OCI-LY7 (cell line): ENCODE measurements at regions of chr1 and their contacts with region 1.

Region 1: GRCh38 chr1:46724991-46725735 is 6.2 kb upstream of the EFCAB14 start:
- DNase-seq: peak; percentile 77
- H3K4me3 ChIP-seq: no peak overlapping the region
- H3K27ac ChIP-seq: no peak overlapping the region
- H3K4me1 ChIP-seq: no peaks in the 10 kb centered on the region
- CTCF ChIP-seq: peak; percentile 87

Region 2: DNA sequence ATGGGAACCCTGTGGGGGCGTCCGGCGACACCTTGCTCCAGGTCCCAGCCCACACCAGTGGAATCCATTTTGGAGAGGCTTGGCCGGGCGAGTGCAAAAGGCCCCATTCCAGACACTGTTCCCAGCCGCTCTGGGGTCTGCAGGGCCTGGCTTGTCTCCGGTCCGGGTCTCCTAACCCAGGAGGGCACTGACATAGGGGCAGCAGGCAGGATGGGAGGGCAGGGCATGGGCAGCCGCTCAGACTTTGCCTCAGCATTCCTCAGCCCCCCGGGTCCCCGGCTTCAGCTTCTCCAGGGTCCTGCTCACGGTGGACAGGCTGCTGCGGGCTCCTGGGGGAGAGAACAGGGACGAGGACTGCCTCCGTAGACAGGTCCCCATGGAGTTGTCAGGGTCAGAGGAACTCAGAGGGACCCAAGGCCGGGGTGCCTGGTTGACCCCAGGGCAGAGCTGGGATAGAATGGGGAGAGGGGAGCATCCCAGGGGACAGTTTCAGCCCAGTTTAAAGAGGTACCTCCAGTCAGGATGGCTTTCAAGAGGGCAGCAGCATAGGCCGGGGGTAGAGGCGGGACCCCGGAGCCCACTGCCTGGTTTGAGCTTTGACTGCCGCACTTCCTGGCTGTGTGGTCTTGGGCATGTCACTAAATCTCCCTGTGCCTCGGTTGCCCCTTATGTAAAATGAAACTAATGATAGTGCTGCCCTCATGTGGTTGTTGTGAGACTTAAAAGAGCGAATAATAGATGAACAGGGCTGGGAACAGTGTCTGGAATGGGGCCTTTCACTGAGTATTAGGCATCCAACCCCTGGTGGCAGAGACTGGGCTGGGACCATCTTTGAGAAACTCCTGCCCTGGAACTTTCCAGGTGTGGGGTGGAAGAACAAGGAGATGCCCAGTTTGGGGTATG is 177.4 kb before region 1 on chr1:
- CTCF ChIA-PET with region 1: no interaction called
- POLR2A ChIA-PET with region 1: no interaction called
- intact Hi-C with region 1: loop called (anchors 10 kb)
- DNase-seq: peak; percentile 72
- H3K4me3 ChIP-seq: no peak overlapping the region
- H3K27ac ChIP-seq: no peak overlapping the region
- H3K4me1 ChIP-seq: no peaks in the 10 kb centered on the region
- CTCF ChIP-seq: peak; percentile 81